ENCODE measurements at regions of chr12 and their contacts with region 1.

Region 1: GRCh38 chr12:98154850-98155249 is 360.5 kb upstream of the TMPO start:
- DNase-seq: peak; percentile 61
- H3K4me3 Mint-ChIP-seq: no peak overlapping the region
- H3K27ac Mint-ChIP-seq: no peak overlapping the region
- H3K4me1 Mint-ChIP-seq: peaks cover 8% of the 10 kb centered on the region
- H3K27me3 Mint-ChIP-seq: no peaks in the 10 kb centered on the region
- CTCF ChIP-seq: peak; percentile 44

Region 2: DNA sequence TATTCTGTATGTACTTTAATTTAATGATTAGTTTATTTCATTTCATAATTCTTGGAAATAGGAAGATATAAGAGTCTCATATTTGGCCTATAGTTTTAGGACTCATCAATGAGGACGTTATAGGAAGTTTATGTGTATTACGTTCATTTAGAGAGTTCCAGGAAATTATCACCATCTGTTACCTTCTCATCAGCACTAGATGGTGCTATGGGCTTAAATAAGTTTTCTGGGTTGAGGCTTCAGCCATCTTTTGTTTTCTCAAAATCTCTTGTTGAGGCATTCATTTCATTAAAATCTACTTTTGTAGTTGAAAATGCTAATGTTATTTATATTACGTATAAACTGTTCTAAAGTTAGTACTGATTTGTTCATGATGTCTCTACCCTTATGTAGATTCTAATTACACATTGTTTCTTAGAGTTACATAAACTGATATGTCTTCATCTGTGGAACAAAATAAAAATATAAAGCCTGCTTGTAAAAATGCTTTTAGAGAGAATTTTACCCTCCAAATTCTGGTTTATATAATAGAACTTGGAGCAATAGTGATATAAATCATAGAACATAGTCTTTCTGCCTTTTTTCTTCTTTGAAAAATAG is 1576.2 kb before region 1 on chr12:
- CTCF ChIA-PET with region 1: no interaction called
- intact Hi-C with region 1: loop called (anchors 10 kb)
- DNase-seq: peak; percentile 20
- H3K4me3 Mint-ChIP-seq: no peak overlapping the region
- H3K27ac Mint-ChIP-seq: no peak overlapping the region
- H3K4me1 Mint-ChIP-seq: no peaks in the 10 kb centered on the region
- H3K27me3 Mint-ChIP-seq: no peaks in the 10 kb centered on the region
- CTCF ChIP-seq: peak; percentile 34

Region 3: DNA sequence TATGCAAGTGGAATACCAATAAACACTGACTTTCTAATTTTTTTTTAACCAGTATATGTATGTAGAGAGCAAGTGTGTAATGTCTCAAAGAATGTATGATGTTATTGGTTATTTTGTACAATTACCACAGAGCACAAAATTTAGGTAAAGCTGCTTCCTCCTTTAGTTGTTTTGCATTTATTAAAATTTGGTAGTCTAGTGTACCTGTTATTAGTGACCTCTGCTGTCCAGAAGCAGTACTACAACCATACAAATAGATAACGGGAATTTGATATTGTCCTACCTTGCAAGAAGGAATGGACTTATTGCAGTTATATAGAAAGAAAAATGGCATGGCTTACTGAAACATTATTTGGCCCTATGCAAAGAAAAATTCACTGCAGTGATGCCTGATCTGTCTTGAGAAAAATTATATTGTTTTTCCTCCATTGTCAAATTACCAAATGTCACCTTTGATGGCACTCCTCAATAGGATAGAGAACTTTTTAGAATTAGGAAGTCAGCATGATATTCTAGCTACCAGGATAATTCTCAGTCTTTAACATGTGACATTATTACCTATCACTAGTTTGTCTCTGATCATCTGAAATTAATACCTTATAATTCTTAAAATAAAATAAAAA is 846.2 kb before region 1 on chr12:
- CTCF ChIA-PET with region 1: no interaction called
- intact Hi-C with region 1: loop called (anchors 2 kb)
- DNase-seq: peak; percentile 35
- H3K4me3 Mint-ChIP-seq: no peak overlapping the region
- H3K27ac Mint-ChIP-seq: no peak overlapping the region
- H3K4me1 Mint-ChIP-seq: peaks cover 8% of the 10 kb centered on the region
- H3K27me3 Mint-ChIP-seq: peaks cover 17% of the 10 kb centered on the region
- CTCF ChIP-seq: peak; percentile 64

Region 4: GRCh38 chr12:97716356-97716755 is 438.5 kb before region 1 on chr12:
- CTCF ChIA-PET with region 1: no interaction called
- intact Hi-C with region 1: loop called (anchors 2 kb)
- DNase-seq: peak; percentile 30
- H3K4me3 Mint-ChIP-seq: no peak overlapping the region
- H3K27ac Mint-ChIP-seq: no peak overlapping the region
- H3K4me1 Mint-ChIP-seq: peaks cover 44% of the 10 kb centered on the region
- H3K27me3 Mint-ChIP-seq: no peaks in the 10 kb centered on the region
- CTCF ChIP-seq: peak; percentile 56

Region 5: DNA sequence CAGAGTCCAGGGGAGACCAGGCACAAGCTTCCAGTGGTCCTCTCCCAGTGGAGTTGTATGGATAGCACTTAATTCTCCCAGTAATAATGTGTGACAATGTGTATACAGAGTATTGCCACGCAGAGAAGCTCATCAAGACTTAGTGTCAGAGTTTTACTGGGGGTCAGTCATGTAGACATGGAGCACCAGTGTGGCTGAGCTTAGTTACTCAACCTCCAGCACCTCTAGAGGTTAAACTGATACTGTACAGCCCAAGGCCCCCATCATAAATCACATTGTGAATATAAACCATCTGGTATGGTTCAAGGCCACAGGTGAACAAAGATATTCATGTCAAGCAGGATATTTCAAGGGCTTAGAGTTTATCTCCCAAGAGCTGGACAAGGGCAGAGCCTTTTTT is 17.6 kb before region 1 on chr12:
- CTCF ChIA-PET with region 1: no interaction called
- intact Hi-C with region 1: no loop called
- DNase-seq: no peak
- H3K4me3 Mint-ChIP-seq: no peak overlapping the region
- H3K27ac Mint-ChIP-seq: no peak overlapping the region
- H3K4me1 Mint-ChIP-seq: no peaks in the 10 kb centered on the region
- H3K27me3 Mint-ChIP-seq: peaks cover 23% of the 10 kb centered on the region
- CTCF ChIP-seq: no peak

Region 6: DNA sequence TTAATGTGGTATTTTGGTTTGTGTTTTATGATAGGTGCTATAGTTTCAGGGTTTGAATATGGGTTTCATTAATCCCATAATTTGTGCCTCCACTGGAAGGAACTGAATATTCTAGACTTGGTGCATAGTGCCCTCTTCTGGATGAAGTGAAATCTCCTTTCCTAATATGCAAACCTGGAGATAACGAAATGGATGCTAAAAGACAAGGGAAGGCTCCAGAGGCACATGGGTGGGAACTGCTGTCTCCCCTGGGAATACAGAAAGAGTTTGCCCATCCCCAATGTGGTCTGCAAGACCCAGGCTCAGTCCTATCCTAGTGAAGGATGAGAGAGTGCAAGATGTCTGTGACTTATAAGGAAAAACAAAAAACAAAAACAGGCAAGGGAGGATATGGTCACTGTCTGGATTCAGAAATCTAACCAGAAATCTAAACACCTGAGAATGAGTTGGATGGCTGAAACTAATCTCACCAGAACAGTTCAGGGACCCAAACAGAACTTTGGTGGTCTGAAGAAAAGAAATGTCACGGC is 218.2 kb after region 1 on chr12:
- CTCF ChIA-PET with region 1: no interaction called
- intact Hi-C with region 1: loop called (anchors 2 kb)
- DNase-seq: peak; percentile 47
- H3K4me3 Mint-ChIP-seq: no peak overlapping the region
- H3K27ac Mint-ChIP-seq: no peak overlapping the region
- H3K4me1 Mint-ChIP-seq: peaks cover 9% of the 10 kb centered on the region
- H3K27me3 Mint-ChIP-seq: peaks cover 52% of the 10 kb centered on the region
- CTCF ChIP-seq: peak; percentile 48

Measured in Calu3 (cell line).